ENCODE measurements at regions of chr11 and their contacts with region 1.

Region 1: DNA sequence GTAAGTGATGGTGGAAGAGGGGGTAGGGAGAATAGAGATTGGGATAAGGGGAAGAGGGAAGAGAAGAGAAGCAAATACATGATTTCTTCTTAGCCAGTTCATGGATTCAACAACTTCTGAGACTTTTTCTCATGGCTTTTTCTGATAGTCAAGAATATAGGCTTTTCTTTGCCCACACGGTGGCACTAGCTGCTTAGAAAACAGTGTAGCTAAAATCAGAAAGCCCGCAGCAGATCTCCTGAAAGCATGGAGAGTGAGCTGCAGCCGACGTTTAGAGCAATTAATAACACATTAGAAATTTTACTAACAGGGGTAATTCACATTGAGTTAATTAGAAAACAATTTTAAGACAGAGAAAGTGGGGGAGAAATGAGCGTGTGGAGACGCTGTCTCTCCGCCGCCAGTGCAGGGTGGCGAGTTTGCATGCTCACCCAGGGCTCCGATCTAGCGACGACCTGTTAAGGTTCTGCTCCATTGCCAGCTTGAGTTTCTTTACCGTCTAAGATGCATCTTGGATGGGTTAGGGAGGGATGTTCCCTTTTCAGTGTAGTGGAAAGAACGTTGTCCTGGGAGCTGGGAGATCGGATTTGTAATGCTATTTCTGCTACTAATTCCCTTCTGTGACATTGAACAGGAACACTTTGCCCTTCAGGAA is 3.3 kb upstream of the RAG1 start:
- DNase-seq: peak in 1 of 2 donors; percentile 68
- H3K4me3 ChIP-seq: peak overlapping the region; percentile 27 to 57
- H3K27ac ChIP-seq: no peak overlapping the region
- H3K4me1 ChIP-seq: no peaks in the 10 kb centered on the region
- H3K27me3 ChIP-seq: no peaks in the 10 kb centered on the region
- CTCF ChIP-seq: peak; percentile 53 to 75 (median 59)

Region 2: GRCh38 chr11:36532941-36533601 is 31.4 kb before region 1 on chr11:
- intact Hi-C with region 1: no loop called
- DNase-seq: no peak
- H3K4me3 ChIP-seq: no peak overlapping the region
- H3K27ac ChIP-seq: no peak overlapping the region
- H3K4me1 ChIP-seq: no peaks in the 10 kb centered on the region
- H3K27me3 ChIP-seq: no peaks in the 10 kb centered on the region
- CTCF ChIP-seq: no peak

Region 3: GRCh38 chr11:36622431-36623136 is 58.1 kb after region 1 on chr11:
- intact Hi-C with region 1: loop called (anchors 1 kb)
- DNase-seq: no peak
- H3K4me3 ChIP-seq: no peak overlapping the region
- H3K27ac ChIP-seq: no peak overlapping the region
- H3K4me1 ChIP-seq: no peaks in the 10 kb centered on the region
- H3K27me3 ChIP-seq: no peaks in the 10 kb centered on the region
- CTCF ChIP-seq: peak; percentile 14 to 46 (median 38)

Region 4: GRCh38 chr11:36672813-36673450 is 108.4 kb after region 1 on chr11:
- intact Hi-C with region 1: loop called (anchors 1 kb)
- DNase-seq: no peak
- H3K4me3 ChIP-seq: no peak overlapping the region
- H3K27ac ChIP-seq: no peak overlapping the region
- H3K4me1 ChIP-seq: no peaks in the 10 kb centered on the region
- H3K27me3 ChIP-seq: no peaks in the 10 kb centered on the region
- CTCF ChIP-seq: peak; percentile 21 to 75 (median 69)

Measured in ascending aorta (tissue), 2 donors.